PC-9 (cell line): ENCODE measurements at regions of chr4 and their contacts with region 1.

Region 1: GRCh38 chr4:147590249-147590920 is 26.8 kb upstream of the TMEM184C start:
- DNase-seq: peak in 1 of 2 experiments; percentile 48
- H3K4me3 ChIP-seq: no peak overlapping the region
- H3K27ac ChIP-seq: no peak overlapping the region
- H3K4me1 ChIP-seq: no peaks in the 10 kb centered on the region
- H3K27me3 ChIP-seq: no peaks in the 10 kb centered on the region
- CTCF ChIP-seq: peak; percentile 87

Region 2: DNA sequence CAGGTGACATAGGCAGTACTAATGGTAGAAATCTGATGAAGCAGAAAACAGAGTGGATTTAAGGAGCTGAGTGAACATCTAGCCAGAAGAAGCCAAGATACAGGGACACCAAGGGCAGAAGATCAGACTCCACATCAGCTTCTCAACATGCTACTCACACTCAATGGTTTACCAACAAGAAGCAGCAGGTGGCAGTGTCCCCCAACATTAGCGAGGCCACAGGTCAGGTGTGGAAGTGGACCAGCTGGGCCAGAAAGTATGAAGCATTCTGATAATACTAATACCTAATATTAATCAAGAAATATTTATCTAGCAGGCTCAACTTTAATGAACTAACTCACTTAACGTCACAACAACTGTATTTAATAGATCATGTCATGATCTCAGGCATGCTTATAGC is 571.3 kb before region 1 on chr4:
- CTCF ChIA-PET with region 1: interaction called, 4 read pairs
- POLR2A ChIA-PET with region 1: no interaction called
- intact Hi-C with region 1: loop called (anchors 1 kb)
- DNase-seq: peak in 1 of 2 experiments; percentile 63
- H3K4me3 ChIP-seq: no peak overlapping the region
- H3K27ac ChIP-seq: no peak overlapping the region
- H3K4me1 ChIP-seq: no peaks in the 10 kb centered on the region
- H3K27me3 ChIP-seq: no peaks in the 10 kb centered on the region
- CTCF ChIP-seq: peak; percentile 76

Region 3: GRCh38 chr4:147096667-147097604 is 493.4 kb before region 1 on chr4:
- CTCF ChIA-PET with region 1: no interaction called
- POLR2A ChIA-PET with region 1: no interaction called
- intact Hi-C with region 1: loop called (anchors 2 kb)
- DNase-seq: peak in 1 of 2 experiments; percentile 36
- H3K4me3 ChIP-seq: no peak overlapping the region
- H3K27ac ChIP-seq: no peak overlapping the region
- H3K4me1 ChIP-seq: no peaks in the 10 kb centered on the region
- H3K27me3 ChIP-seq: no peaks in the 10 kb centered on the region
- CTCF ChIP-seq: peak; percentile 78

Region 4: DNA sequence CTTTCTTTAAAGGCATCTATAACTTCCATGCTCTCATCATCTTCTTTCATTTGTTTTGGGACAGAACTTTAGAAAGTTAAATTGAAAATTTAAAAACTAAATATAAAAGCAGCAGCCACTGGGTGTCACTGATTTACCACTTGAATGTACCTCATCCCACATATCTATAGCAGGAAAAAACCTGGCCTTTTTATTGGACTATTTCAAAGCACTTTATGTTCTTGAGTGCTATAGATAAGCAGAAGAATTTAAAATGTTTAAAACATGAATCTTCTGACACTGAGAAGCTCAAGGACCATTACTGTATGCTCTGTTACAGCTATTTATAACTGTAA is 479.4 kb before region 1 on chr4:
- CTCF ChIA-PET with region 1: no interaction called
- POLR2A ChIA-PET with region 1: no interaction called
- intact Hi-C with region 1: loop called (anchors 1 kb)
- DNase-seq: no peak
- H3K4me3 ChIP-seq: no peak overlapping the region
- H3K27ac ChIP-seq: no peak overlapping the region
- H3K4me1 ChIP-seq: no peaks in the 10 kb centered on the region
- H3K27me3 ChIP-seq: no peaks in the 10 kb centered on the region
- CTCF ChIP-seq: peak; percentile 40; the same call in 1 of the 2 replicates

Region 5: DNA sequence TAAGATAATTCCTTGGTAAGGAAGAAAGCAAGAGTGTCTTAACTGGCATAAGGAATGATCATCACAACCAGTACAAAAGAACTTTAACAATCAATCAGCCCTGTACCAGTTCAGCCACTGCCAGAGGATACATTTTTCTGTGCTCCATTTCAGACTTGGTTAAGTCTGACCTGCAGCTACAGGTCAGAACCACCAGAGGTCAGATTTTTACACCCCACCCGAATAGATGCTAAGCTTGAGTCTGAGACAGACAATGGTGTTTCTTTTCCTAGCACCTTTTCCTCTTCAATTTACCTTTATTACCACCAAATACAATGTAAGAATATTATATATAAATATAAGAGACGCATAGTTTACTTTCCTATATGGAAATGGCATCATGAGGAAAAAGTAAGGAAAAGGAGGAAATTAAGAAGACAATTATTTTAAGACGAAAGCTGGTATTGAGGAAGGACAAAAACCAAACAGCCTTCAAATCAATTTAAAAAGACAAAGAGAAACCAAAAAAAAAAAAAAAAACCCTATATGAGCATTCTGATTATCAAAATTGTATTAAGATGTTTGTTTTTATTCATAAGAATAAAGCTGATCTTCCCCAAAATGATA is 429.4 kb before region 1 on chr4:
- CTCF ChIA-PET with region 1: interaction called, 4 read pairs
- POLR2A ChIA-PET with region 1: no interaction called
- intact Hi-C with region 1: loop called (anchors 1 kb)
- DNase-seq: peak in 1 of 2 experiments; percentile 13
- H3K4me3 ChIP-seq: no peak overlapping the region
- H3K27ac ChIP-seq: no peak overlapping the region
- H3K4me1 ChIP-seq: no peaks in the 10 kb centered on the region
- H3K27me3 ChIP-seq: no peaks in the 10 kb centered on the region
- CTCF ChIP-seq: peak; percentile 75

Region 6: GRCh38 chr4:147508346-147508745 is 82.0 kb before region 1 on chr4:
- CTCF ChIA-PET with region 1: no interaction called
- POLR2A ChIA-PET with region 1: no interaction called
- intact Hi-C with region 1: no loop called
- DNase-seq: no peak
- H3K4me3 ChIP-seq: no peak overlapping the region
- H3K27ac ChIP-seq: no peak overlapping the region
- H3K4me1 ChIP-seq: no peaks in the 10 kb centered on the region
- H3K27me3 ChIP-seq: no peaks in the 10 kb centered on the region
- CTCF ChIP-seq: no peak

Region 7: GRCh38 chr4:147518846-147519767 is 71.3 kb before region 1 on chr4:
- CTCF ChIA-PET with region 1: interaction called, 9 read pairs
- POLR2A ChIA-PET with region 1: interaction called, 3 read pairs
- intact Hi-C with region 1: loop called (anchors 1 kb)
- DNase-seq: peak; percentile 44 to 45
- H3K4me3 ChIP-seq: no peak overlapping the region
- H3K27ac ChIP-seq: no peak overlapping the region
- H3K4me1 ChIP-seq: no peaks in the 10 kb centered on the region
- H3K27me3 ChIP-seq: no peaks in the 10 kb centered on the region
- CTCF ChIP-seq: peak; percentile 83

Region 8: DNA sequence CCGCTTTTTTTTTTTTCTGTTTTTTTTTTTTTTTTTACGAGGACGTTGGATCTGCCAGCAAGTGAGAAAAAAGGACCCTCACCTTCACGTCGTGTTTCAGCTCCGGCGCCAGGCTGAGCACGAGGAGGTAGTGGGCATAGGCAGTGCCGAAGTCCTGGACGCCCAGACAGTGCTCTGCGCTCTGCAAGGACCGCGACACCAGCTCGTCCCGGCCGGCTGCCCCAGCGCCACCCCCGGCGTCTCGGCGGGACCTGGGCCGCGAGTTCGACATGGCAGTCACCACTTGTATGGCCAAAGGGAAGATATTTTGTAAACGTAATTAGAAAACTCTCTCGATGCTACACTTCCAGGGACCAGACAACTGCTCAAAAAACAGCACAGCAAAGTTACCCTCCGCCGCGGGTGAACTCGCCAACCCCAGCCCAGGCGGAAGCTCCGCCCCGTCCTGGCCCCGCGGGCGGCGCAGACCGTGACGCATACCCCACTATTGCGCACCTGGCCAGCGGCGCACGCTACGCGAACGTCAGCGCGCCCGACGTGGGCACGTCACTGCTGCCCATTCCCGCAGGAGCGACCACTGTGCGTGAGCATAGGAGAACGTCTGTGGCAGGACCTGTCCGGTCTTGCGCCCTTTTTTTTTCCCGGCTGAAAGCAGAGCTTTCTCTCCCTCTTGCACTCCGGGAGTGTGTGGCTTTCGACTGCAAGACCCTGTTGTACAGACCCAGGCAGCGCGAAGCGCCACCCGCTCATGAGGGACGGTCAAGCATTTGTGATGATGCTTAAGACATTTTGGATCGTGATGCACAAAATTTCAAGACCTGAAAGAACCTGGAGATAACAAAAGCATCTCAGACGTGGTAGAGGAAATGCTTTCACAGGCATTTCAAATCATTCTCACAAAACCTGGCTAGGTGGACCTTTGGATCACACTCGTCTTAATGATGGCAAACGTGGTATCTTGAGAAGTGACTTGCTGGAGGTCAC is 93.6 kb after region 1 on chr4 and contains the start of gene PRMT9:
- CTCF ChIA-PET with region 1: interaction called, 15 read pairs
- POLR2A ChIA-PET with region 1: no interaction called
- intact Hi-C with region 1: no loop called
- DNase-seq: peak; percentile 69 to 89
- H3K4me3 ChIP-seq: peak within 1 kb of the TSS; percentile 82
- H3K27ac ChIP-seq: peak within 1 kb of the TSS; percentile 59
- H3K4me1 ChIP-seq: peaks cover 8% of the 10 kb centered on the region; the same call in 1 of the 2 replicates
- H3K27me3 ChIP-seq: no peaks in the 10 kb centered on the region
- CTCF ChIP-seq: no peak
- total RNA-seq, gene PRMT9: 8.4 and 9.0 TPM in 2 replicates